Activated CD8-positive, alpha-beta T cell treated with anti-CD3 and anti-CD28 coated beads, Interleukin-2, amount 10 ng/mL, durations not matched to agents 7 days and 5 days (primary cell): ENCODE measurements at regions of chr13 and their contacts with region 1.

Region 1: DNA sequence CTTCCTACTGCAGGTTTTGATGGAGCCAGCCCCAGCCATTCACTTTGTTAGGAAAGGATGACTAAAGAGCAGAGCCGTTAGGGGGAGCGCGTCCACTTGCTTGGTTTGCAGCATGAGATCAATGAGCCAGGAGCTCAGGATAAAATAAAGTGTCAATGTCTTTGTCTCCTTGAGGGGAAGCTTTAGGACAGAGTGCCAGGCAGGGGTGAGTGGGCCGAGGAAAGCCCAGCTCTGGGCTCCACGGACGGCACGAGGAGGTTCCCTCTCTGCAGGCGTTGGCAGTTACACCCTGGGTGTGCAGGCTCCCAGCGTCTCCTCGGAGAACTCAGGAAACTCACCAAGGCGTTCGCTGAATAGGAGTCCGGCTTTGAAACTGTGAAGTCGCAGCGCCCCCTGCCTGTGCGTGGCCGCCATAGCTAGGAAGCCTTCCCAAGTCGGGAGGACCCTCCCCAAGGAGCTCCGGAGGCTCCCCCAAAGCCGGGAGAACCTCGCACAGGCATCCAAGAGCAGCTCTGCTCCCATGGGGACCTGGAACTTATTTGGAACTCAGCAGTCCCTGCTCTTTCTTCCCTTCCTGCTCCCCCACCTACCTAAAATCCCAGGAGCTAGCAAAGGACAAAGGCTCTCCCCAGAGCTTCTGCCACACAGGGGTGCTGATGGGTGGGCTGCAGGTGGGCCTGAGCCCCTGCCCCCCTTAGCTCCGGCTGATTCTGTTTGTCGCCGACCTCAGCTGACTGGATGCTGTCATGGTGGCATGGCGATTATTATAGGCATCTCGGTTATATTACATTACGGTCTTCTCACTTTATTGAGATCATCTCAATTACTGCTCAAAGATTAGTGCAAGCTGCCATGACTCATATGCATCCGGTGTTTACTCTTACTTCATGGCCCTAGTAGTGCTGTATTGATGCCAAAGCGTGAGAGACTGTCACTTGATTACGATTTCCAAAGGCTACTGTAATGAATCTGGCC is 34.4 kb downstream of the GSX1 start:
- DNase-seq: peak; percentile 72
- ATAC-seq: peak; percentile 70
- H3K4me3 Mint-ChIP-seq: no peak overlapping the region
- H3K27ac Mint-ChIP-seq: no peak overlapping the region
- H3K4me1 Mint-ChIP-seq: peaks cover 12% of the 10 kb centered on the region
- H3K27me3 Mint-ChIP-seq: peaks cover 58% of the 10 kb centered on the region

Region 2: DNA sequence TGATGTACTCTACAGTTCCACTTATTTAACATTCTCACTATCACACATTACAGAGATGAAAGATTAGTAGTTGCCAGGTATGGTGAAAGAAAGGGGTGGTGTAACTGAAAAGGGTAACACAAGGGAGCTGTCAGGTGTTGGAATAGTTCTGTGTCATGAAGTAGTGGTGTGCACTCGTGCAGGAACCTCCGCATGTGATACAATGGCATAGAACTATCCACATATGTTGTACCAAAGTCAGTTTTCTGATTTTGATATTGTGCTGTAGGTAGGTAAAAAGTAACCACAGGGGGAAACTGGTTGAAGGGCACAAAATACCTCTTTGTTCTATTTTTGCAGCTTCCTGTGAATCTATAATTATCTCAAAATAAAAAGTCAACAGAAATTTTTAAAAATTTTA is 599.7 kb before region 1 on chr13:
- CTCF ChIA-PET with region 1: no interaction called
- POLR2A ChIA-PET with region 1: no interaction called
- DNase-seq: no peak
- ATAC-seq: peak; percentile 19
- H3K4me3 Mint-ChIP-seq: no peak overlapping the region
- H3K27ac Mint-ChIP-seq: no peak overlapping the region
- H3K4me1 Mint-ChIP-seq: peaks cover 13% of the 10 kb centered on the region
- H3K27me3 Mint-ChIP-seq: peaks cover 6% of the 10 kb centered on the region

Region 3: DNA sequence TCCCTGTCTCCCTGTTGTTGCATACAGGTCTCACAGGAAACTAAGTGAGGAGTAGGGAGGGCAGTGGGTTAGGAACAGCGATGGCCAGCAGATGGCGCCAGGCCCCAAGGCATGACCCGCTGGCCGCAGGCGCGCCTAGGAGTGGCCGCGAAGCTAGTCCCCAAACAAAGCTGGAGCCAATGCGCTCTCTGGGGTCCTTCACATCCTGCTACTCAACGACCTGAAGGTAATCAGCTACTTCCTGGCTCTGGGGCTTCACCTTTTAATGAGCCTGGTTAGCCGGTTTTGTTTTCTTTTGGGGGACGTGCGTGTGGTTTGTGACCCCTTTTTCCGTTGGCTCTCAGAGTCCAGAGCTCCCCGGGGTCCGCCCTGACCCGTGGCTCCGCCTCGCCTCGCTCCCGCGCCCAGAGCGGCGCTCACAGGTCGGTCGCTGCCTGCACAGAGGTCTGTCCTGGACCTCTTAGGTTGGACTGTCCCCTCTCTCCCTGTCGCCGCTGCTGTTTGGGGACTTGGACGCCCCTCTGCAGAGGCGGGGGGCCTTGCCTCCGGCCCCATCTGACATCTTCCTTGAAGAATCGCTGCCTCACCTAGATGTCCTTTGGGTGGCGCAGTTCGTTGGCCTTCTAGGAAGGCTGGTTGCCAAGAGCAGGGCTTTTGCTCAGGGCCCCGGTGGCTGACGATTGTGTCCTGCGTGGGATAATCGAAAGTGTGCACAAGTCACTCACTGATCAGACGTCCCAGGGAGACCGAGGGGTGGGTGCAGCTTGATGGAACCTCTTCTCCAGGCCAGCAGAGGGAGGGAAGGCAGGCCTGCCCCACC is 464.4 kb before region 1 on chr13:
- CTCF ChIA-PET with region 1: interaction called, 96 read pairs
- POLR2A ChIA-PET with region 1: interaction called, 3 read pairs
- DNase-seq: peak; percentile 87
- ATAC-seq: peak; percentile 97
- H3K4me3 Mint-ChIP-seq: peak overlapping the region; percentile 68
- H3K27ac Mint-ChIP-seq: peak overlapping the region; percentile 39
- H3K4me1 Mint-ChIP-seq: peaks cover 5% of the 10 kb centered on the region
- H3K27me3 Mint-ChIP-seq: peaks cover 22% of the 10 kb centered on the region

Region 4: DNA sequence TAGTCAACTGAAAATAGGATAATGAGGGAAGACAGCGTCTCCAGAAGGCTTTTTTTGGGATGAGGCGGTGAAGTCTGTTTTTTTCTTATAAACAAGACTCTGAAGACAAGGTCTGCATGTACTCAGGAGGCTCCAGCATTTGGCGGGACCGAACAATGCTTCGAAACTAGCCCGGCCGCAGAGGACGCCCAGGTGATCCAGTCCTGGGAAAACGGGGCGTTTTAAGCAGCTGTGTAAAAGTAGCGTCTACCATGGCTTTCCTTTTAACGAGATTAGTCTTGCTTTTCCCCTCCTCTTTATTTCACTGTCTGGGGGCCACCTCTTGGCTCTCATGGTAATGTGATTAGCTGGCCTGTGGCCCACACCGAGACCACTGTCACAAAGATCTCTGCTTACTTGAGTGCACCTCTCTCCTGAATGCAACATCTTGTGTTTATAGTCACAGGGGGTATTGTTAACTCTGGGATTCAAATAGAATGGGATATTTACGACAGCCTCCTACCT is 431.6 kb before region 1 on chr13:
- CTCF ChIA-PET with region 1: interaction called, 12 read pairs
- POLR2A ChIA-PET with region 1: no interaction called
- DNase-seq: no peak
- ATAC-seq: no peak
- H3K4me3 Mint-ChIP-seq: no peak overlapping the region
- H3K27ac Mint-ChIP-seq: no peak overlapping the region
- H3K4me1 Mint-ChIP-seq: no peaks in the 10 kb centered on the region
- H3K27me3 Mint-ChIP-seq: peaks cover 5% of the 10 kb centered on the region

Region 5: DNA sequence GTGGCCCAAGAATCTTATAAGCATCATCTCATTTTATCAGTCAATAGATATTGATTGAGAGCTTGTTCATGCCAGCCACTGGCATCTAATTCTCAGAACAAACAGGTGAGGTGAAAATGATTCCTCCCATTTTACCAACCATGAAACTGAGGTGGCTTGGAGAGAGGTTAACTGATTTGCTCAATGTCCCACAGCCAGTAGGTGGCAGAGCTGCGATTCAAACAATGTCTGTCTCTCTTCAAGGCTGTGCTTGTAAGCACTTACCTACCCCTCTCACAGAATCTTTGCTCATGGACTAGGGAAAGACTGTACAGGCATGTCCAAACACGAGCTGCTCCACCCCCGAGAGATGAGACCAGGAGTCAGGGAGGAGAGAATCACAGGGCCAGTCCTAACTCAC is 55.9 kb before region 1 on chr13:
- CTCF ChIA-PET with region 1: interaction called, 106 read pairs
- POLR2A ChIA-PET with region 1: no interaction called
- DNase-seq: peak; percentile 55
- ATAC-seq: no peak
- H3K4me3 Mint-ChIP-seq: no peak overlapping the region
- H3K27ac Mint-ChIP-seq: no peak overlapping the region
- H3K4me1 Mint-ChIP-seq: no peaks in the 10 kb centered on the region
- H3K27me3 Mint-ChIP-seq: peaks cover 12% of the 10 kb centered on the region

Region 6: GRCh38 chr13:27797228-27797624 is 29.4 kb before region 1 on chr13:
- CTCF ChIA-PET with region 1: interaction called, 20 read pairs
- POLR2A ChIA-PET with region 1: no interaction called
- DNase-seq: no peak
- ATAC-seq: no peak
- H3K4me3 Mint-ChIP-seq: no peak overlapping the region
- H3K27ac Mint-ChIP-seq: no peak overlapping the region
- H3K4me1 Mint-ChIP-seq: peaks cover 7% of the 10 kb centered on the region
- H3K27me3 Mint-ChIP-seq: peaks cover 84% of the 10 kb centered on the region

Region 7: GRCh38 chr13:27981006-27981708 is 154.5 kb after region 1 on chr13:
- CTCF ChIA-PET with region 1: interaction called, 125 read pairs
- POLR2A ChIA-PET with region 1: no interaction called
- DNase-seq: no peak
- ATAC-seq: no peak
- H3K4me3 Mint-ChIP-seq: no peak overlapping the region
- H3K27ac Mint-ChIP-seq: no peak overlapping the region
- H3K4me1 Mint-ChIP-seq: peaks cover 17% of the 10 kb centered on the region
- H3K27me3 Mint-ChIP-seq: peaks cover 65% of the 10 kb centered on the region

Region 8: DNA sequence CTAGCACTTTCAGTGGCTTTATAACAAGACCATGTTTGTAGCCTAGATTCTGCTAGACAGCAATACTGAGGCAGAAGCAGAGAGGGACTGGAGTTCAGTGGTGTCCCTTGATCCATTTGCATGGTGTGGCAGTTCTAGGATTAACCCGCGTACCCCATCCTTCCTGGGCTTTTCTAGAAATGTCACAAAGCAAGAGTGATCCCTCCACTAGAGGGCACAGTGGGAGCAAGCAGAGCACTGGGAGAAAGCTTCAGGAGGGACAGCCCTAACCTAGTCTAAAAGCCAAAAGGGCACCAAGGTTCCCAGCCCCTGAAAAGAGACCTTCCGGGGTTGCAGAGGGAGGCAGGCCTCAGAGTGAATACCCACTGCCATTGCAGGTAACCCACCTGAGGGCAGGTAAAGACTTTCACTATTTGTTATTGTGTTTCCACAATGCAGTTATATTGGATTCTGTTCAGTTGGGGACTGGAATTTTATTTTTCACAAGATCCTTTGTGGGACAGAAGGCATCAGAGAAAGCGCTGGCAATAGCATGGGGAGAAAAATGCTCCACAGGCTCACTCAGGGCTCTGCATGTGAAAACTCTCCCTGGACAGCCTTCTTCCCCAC is 497.6 kb after region 1 on chr13:
- CTCF ChIA-PET with region 1: no interaction called
- POLR2A ChIA-PET with region 1: no interaction called
- DNase-seq: peak; percentile 77
- ATAC-seq: peak; percentile 53
- H3K4me3 Mint-ChIP-seq: no peak overlapping the region
- H3K27ac Mint-ChIP-seq: no peak overlapping the region
- H3K4me1 Mint-ChIP-seq: peaks cover 4% of the 10 kb centered on the region
- H3K27me3 Mint-ChIP-seq: no peaks in the 10 kb centered on the region